Dorsolateral prefrontal cortex (tissue), 120 donors: ENCODE measurements at regions of chr1 and their contacts with region 1.

Region 1: GRCh38 chr1:203625628-203626019 is 1.0 kb upstream of the ATP2B4 start:
- DNase-seq: peak in 3 of 10 donors; percentile 23 to 63 (median 56)
- H3K4me3 ChIP-seq: peak overlapping the region in 16 of 59 donors; percentile 6 to 90 (median 72)
- H3K27ac ChIP-seq: peak overlapping the region in 35 of 59 donors; percentile 1 to 90 (median 64)
- H3K27me3 ChIP-seq: no peaks in the 10 kb centered on the region
- CTCF ChIP-seq: peak; percentile 19 to 84 (median 69)

Region 2: GRCh38 chr1:203669739-203670138 is 44.1 kb after region 1 on chr1:
- intact Hi-C with region 1: loop called (anchors 2 to 5 kb)
- DNase-seq: peak in 7 of 10 donors; percentile 38 to 86 (median 67)
- H3K4me3 ChIP-seq: peak overlapping the region in 2 of 59 donors; percentile 2 to 14
- H3K27ac ChIP-seq: peak overlapping the region in 57 of 59 donors; percentile 39 to 93 (median 83)
- H3K27me3 ChIP-seq: no peaks in the 10 kb centered on the region
- CTCF ChIP-seq: peak in 2 of 56 donors; percentile 5 to 29

Region 3: DNA sequence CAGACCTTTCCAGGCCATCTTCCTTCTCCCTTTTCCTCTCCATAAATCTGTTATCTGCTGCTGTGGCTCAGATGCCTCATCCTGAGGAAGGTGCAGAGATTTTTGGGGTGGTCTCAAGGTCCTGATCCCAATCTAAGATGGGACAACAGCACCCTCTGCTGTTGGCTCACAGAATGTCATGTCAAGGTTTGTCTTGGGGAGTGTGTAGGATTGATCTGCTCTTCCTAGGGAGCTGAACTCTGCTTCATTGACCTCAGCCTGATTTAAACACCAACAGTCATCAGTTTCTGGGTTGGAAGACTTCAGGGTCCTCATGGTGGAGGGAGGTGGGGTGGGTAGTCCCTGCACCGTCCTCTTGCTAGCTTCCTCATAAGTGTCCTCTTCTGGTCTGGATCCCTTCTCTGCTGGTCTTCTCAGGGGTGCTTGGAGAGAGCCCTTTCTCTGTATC is 76.5 kb after region 1 on chr1:
- intact Hi-C with region 1: loop called (anchors 1 to 2 kb)
- DNase-seq: peak; percentile 27 to 80 (median 58)
- H3K4me3 ChIP-seq: no peak overlapping the region
- H3K27ac ChIP-seq: peak overlapping the region in 12 of 59 donors; percentile 4 to 60 (median 30)
- H3K27me3 ChIP-seq: no peaks in the 10 kb centered on the region
- CTCF ChIP-seq: peak; percentile 78 to 98 (median 93)

Region 4: DNA sequence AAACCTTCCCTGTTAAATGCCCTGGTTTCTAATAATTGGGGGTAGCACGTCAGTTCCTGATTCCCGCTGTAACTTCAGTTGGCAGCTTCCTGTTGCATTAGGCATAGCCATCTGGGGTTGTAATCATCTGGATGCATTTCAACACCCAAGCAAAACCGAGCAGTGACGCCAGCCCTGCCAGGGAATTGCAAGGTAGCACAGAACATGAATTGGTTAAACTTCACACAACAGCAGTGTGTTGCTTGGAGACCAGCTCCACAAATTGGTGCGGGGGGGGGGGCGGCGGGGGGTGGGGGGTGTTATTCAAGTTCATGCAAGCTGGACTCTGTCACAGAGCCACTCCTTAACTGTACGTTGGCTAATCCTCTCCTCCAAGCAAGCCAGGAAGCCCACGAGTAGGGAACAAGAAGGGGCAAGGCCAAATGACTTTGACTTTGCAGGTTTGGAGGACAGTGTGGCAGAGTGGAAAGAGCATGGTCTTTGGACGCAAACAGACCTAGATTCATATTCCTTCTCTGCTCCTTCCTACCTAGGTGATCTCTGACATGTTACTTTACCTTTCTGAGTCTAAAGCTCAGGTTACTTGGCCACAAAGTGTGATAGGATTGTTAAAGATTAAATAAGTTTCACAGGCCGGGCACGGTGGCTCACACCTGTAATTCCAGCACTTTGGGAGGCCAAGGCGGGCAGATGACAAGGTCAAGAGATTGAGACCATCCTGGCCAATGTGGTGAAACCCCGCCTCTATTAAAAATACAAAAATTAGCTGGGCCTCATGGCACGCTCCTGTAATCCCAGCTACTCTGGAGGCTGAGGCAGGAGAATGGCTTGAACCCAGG is 144.1 kb after region 1 on chr1:
- intact Hi-C with region 1: loop called (anchors 5 to 10 kb)
- DNase-seq: peak in 7 of 10 donors; percentile 35 to 80 (median 53)
- H3K4me3 ChIP-seq: peak overlapping the region in 35 of 59 donors; percentile 13 to 55 (median 34)
- H3K27ac ChIP-seq: no peak overlapping the region
- H3K27me3 ChIP-seq: no peaks in the 10 kb centered on the region
- CTCF ChIP-seq: no peak